Naive thymus-derived CD4-positive, alpha-beta T cell (primary cell): ENCODE measurements at regions of chr19 and their contacts with region 1.

Region 1: DNA sequence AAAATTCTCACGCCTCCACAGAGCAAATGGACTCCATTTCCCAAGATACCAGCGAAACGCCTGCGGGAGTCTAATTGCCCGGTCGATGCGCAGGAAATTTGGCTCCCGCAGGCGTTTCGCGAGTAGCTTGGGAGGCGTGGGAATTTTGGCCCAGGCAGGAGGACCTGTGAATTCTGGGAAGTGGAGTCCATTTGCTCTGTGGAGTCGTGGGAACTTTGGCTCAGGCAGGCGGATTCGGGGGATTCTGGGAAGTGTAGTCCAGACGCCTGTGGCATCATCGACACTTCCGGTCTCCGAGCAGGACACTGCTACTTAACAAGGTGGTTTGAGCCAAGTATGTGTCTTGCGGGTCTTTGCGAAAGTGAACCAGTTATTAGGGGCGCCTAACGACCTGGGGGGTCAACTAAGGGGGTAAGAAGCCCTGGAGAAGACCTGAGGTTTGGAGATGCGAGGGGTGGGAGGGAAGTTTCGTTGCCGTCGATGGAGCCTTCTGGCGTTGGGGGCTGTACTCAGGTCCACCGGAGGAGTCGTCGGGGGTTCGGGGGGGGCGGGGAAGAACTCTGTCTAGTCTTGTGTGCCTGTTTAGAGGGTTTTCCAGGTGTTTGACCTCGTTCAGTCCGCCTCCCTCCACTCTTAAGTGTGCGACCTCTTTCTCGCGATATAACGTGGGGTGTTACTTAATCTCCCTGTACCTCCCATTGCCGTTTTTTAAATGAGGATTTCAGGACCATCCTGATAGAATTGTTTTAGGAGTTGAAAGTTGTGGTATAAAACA is at the start of gene ZNF155:
- DNase-seq: peak; percentile 46 to 72 (median 64)
- ATAC-seq: peak; percentile 92
- H3K4me3 ChIP-seq: peak within 1 kb of the TSS; percentile 96
- H3K4me3 Mint-ChIP-seq: peak within 1 kb of the TSS; percentile 89 to 99 (median 96)
- H3K27ac ChIP-seq: peak within 1 kb of the TSS; percentile 79
- H3K27ac Mint-ChIP-seq: peak within 1 kb of the TSS; percentile 72 to 97 (median 93)
- H3K4me1 ChIP-seq: peaks cover 0 to 3% of the 10 kb centered on the region in 2 donors
- H3K4me1 Mint-ChIP-seq: peaks cover 0 to 28% (median 14%) of the 10 kb centered on the region in 7 donors
- H3K27me3 ChIP-seq: no peaks in the 10 kb centered on the region
- H3K27me3 Mint-ChIP-seq: no peaks in the 10 kb centered on the region
- total RNA-seq, gene ZNF155: 5.2 to 13.3 (median 9.1) TPM

Region 2: DNA sequence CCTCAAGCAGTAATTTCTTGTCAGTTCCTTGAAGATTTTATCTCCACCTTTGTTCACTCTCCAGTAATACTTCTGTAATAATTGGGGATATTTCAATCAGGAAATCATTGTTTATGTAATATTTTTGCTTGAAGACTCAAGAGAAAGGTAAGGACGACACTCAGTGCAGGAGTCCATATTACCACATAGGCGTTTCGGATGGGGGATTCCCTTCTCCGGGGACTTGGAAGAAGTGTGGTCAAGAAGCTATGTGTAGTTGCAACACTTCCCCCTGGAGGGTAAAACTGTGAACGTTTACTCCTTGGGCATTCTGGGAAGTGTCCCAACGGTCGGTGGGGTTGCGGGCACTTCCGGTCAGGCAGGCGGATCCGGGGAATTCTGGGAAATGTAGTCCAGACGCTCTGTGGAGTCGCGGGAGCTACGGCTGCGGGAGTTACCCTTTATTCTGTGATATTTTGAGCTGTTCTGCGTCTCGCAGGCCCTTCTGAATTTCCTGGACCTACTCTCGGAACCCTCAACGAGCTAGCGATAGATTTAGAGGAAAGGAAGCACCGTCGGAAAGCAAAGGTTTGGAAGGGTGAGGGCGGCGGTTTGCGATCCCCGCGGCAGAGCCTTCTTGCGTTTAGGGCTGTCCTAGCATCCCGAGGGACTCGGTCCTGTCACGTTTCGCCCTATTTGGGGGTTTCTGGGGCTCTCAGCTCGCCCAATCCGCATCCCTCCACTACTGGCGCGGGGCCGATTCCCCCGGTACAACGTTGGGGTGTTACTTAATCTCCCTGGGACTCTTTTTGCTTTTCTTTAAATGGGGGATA is 33.1 kb before region 1 on chr19 and contains the start of gene ZNF221:
- CTCF ChIA-PET with region 1: no interaction called
- POLR2A ChIA-PET with region 1: no interaction called
- intact Hi-C with region 1: loop called (anchors 1 to 2 kb)
- DNase-seq: peak in 8 of 9 donors; percentile 8 to 64 (median 28)
- ATAC-seq: peak; percentile 88
- H3K4me3 ChIP-seq: peak within 1 kb of the TSS; percentile 91
- H3K4me3 Mint-ChIP-seq: peak within 1 kb of the TSS; percentile 91 to 98 (median 96)
- H3K27ac ChIP-seq: peak within 1 kb of the TSS; percentile 28
- H3K27ac Mint-ChIP-seq: peak within 1 kb of the TSS in 8 of 9 donors; percentile 44 to 92 (median 80)
- H3K4me1 ChIP-seq: peaks cover 0 to 5% of the 10 kb centered on the region in 2 donors
- H3K4me1 Mint-ChIP-seq: peaks cover 6 to 17% (median 11%) of the 10 kb centered on the region in 7 donors
- H3K27me3 ChIP-seq: no peaks in the 10 kb centered on the region
- H3K27me3 Mint-ChIP-seq: peaks cover 0 to 40% (median 21%) of the 10 kb centered on the region in 5 donors
- total RNA-seq, gene ZNF221: 0.69 to 2.0 (median 1.7) TPM